ENCODE measurements at regions of chr7 and their contacts with region 1.

Region 1: GRCh38 chr7:75738987-75739795 is 450 bp upstream of the HIP1 start:
- DNase-seq: peak; percentile 98 to 99 (median 99)
- ATAC-seq: peak; percentile 97
- H3K4me3 ChIP-seq: peak overlapping the region; percentile 93
- H3K4me3 Mint-ChIP-seq: peak overlapping the region; percentile 82 to 100 (median 97)
- H3K27ac ChIP-seq: peak overlapping the region; percentile 80
- H3K27ac Mint-ChIP-seq: peak overlapping the region; percentile 28 to 99 (median 94)
- H3K4me1 ChIP-seq: peaks cover 4 to 15% of the 10 kb centered on the region in 2 donors
- H3K4me1 Mint-ChIP-seq: peaks cover 0 to 19% (median 14%) of the 10 kb centered on the region in 7 donors
- H3K27me3 ChIP-seq: no peaks in the 10 kb centered on the region
- H3K27me3 Mint-ChIP-seq: peaks cover 0 to 41% (median 4%) of the 10 kb centered on the region in 5 donors

Region 2: GRCh38 chr7:74083117-74083876 is 1655.9 kb before region 1 on chr7 and contains the start of gene LIMK1:
- CTCF ChIA-PET with region 1: no interaction called
- POLR2A ChIA-PET with region 1: no interaction called
- intact Hi-C with region 1: loop called in 1 of 2 experiments (anchors 2 kb)
- DNase-seq: peak; percentile 71 to 90 (median 83)
- ATAC-seq: peak; percentile 98
- H3K4me3 ChIP-seq: peak within 1 kb of the TSS; percentile 44
- H3K4me3 Mint-ChIP-seq: peak within 1 kb of the TSS; percentile 66 to 89 (median 80)
- H3K27ac ChIP-seq: peak within 1 kb of the TSS; percentile 69
- H3K27ac Mint-ChIP-seq: peak within 1 kb of the TSS in 8 of 9 donors; percentile 18 to 89 (median 76)
- H3K4me1 ChIP-seq: peaks cover 7 to 11% of the 10 kb centered on the region in 2 donors
- H3K4me1 Mint-ChIP-seq: peaks cover 0 to 18% (median 9%) of the 10 kb centered on the region in 7 donors
- H3K27me3 ChIP-seq: no peaks in the 10 kb centered on the region
- H3K27me3 Mint-ChIP-seq: no peaks in the 10 kb centered on the region
- total RNA-seq, gene LIMK1: 11.0 to 19.7 (median 14.1) TPM

Region 3: GRCh38 chr7:74449809-74450397 is 1289.3 kb before region 1 on chr7:
- CTCF ChIA-PET with region 1: no interaction called
- POLR2A ChIA-PET with region 1: no interaction called
- intact Hi-C with region 1: loop called in 1 of 2 experiments (anchors 10 kb)
- DNase-seq: peak; percentile 31 to 75 (median 60)
- ATAC-seq: peak; percentile 49
- H3K4me3 ChIP-seq: no peak overlapping the region
- H3K4me3 Mint-ChIP-seq: no peak overlapping the region
- H3K27ac ChIP-seq: no peak overlapping the region
- H3K27ac Mint-ChIP-seq: peak overlapping the region in 5 of 9 donors; percentile 40 to 84 (median 58)
- H3K4me1 ChIP-seq: peaks cover 0 to 5% of the 10 kb centered on the region in 2 donors
- H3K4me1 Mint-ChIP-seq: peaks cover 7 to 19% (median 14%) of the 10 kb centered on the region in 7 donors
- H3K27me3 ChIP-seq: no peaks in the 10 kb centered on the region
- H3K27me3 Mint-ChIP-seq: peaks cover 0 to 20% (median 0%) of the 10 kb centered on the region in 5 donors

Region 4: DNA sequence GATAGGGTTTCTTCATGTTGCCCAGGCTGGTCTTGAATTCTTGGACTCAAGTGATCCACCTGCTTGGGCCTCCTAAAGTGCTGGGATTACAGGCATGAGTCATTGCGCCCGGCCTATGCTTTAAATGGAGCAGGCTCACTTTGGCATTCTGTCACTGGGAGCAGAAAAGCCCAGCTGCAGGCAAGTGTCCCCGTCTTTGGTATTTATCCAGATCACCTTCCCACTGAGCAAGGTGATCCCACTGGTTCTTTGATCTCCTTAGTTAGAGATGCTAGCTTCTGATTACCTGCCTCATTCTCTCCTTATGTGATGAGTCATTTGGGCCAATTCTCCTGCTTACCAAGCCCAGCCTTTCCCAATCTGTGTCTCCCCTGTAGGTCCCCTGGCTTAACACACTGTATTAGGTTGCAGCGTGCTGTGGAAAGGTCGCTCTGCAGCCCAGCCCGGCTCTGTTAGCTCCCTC is 207.8 kb before region 1 on chr7:
- CTCF ChIA-PET with region 1: no interaction called
- POLR2A ChIA-PET with region 1: no interaction called
- intact Hi-C with region 1: loop called (anchors 1 kb)
- DNase-seq: no peak
- ATAC-seq: no peak
- H3K4me3 ChIP-seq: no peak overlapping the region
- H3K4me3 Mint-ChIP-seq: no peak overlapping the region
- H3K27ac ChIP-seq: no peak overlapping the region
- H3K27ac Mint-ChIP-seq: peak overlapping the region in 1 of 9 donors; percentile 47
- H3K4me1 ChIP-seq: peaks cover 2 to 8% of the 10 kb centered on the region in 2 donors
- H3K4me1 Mint-ChIP-seq: peaks cover 14 to 19% (median 15%) of the 10 kb centered on the region in 7 donors
- H3K27me3 ChIP-seq: no peaks in the 10 kb centered on the region
- H3K27me3 Mint-ChIP-seq: no peaks in the 10 kb centered on the region

Region 5: DNA sequence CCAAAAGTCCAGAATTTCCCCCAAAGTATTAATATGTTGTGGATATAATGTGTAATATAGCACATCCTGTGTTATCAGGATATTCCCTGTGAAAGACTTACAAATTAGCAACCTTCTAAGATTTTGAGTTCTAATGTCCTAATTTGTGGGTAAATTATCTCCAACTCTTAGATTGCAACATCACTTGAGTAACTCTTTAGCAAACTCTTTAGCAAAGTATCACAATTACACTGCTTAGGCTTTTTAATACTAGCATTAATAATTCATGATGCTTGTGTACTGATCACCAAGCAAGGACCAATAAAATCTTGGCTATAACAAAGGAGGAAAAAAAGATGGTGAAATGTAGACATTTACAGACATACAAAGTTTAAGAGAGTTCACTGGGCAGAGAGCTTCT is 28.1 kb before region 1 on chr7:
- CTCF ChIA-PET with region 1: no interaction called
- POLR2A ChIA-PET with region 1: no interaction called
- intact Hi-C with region 1: no loop called
- DNase-seq: no peak
- ATAC-seq: no peak
- H3K4me3 ChIP-seq: no peak overlapping the region
- H3K4me3 Mint-ChIP-seq: no peak overlapping the region
- H3K27ac ChIP-seq: no peak overlapping the region
- H3K27ac Mint-ChIP-seq: no peak overlapping the region
- H3K4me1 ChIP-seq: no peaks in the 10 kb centered on the region
- H3K4me1 Mint-ChIP-seq: peaks cover 0 to 16% (median 8%) of the 10 kb centered on the region in 7 donors
- H3K27me3 ChIP-seq: no peaks in the 10 kb centered on the region
- H3K27me3 Mint-ChIP-seq: peaks cover 0 to 25% (median 4%) of the 10 kb centered on the region in 5 donors

Region 6: GRCh38 chr7:75994388-75995051 is 255.3 kb after region 1 on chr7 and contains the start of gene TMEM120A:
- CTCF ChIA-PET with region 1: no interaction called
- POLR2A ChIA-PET with region 1: no interaction called
- intact Hi-C with region 1: loop called (anchors 1 kb)
- DNase-seq: peak; percentile 87 to 98 (median 92)
- ATAC-seq: peak; percentile 99
- H3K4me3 ChIP-seq: peak within 1 kb of the TSS; percentile 84
- H3K4me3 Mint-ChIP-seq: peak within 1 kb of the TSS; percentile 62 to 82 (median 76)
- H3K27ac ChIP-seq: peak within 1 kb of the TSS; percentile 80
- H3K27ac Mint-ChIP-seq: peak within 1 kb of the TSS in 5 of 9 donors; percentile 48 to 65 (median 55)
- H3K4me1 ChIP-seq: peaks cover 6 to 10% of the 10 kb centered on the region in 2 donors
- H3K4me1 Mint-ChIP-seq: peaks cover 12 to 37% (median 34%) of the 10 kb centered on the region in 7 donors
- H3K27me3 ChIP-seq: no peaks in the 10 kb centered on the region
- H3K27me3 Mint-ChIP-seq: no peaks in the 10 kb centered on the region
- total RNA-seq, gene TMEM120A: 19.1 to 38.6 (median 35.6) TPM

Region 7: DNA sequence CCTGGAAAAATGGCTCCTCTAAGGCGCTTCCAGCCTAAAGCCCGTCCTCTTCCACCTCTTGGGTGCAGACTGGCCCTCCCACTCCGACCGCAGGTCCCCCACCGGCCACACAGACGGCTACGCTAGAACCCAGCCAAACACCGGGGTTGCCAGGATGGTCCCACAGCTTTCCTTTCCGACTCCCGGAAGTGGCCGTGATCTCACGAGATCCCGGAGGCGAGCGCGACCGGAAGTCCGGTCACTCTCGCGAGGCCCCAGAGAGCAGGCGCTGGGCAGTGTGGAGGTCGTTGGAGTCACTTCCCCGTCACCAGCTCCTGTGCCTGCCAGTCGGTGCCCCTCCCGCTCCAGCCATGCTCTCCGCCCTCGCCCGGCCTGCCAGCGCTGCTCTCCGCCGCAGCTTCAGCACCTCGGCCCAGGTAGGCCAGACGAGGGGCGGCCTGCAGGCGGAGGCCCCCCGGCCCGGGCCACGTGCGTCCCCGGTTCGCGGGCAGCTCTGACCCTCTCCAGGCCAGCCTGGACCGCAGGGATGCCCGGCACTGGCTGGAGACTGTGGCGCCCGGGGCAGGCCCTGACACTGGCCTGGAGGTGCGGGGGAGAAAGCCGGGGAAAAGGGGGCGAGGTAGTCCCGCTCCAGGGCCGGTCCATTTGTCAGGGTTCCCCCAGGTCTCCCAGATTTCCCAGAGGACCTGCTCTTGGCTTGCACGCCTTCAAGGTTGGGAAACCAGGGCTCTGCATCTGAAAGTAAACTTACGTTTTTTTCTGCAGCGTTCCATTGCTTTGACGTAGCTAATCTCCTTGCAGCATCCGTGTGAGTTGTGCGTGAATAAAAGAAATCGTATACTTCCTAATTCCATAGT is 308.8 kb after region 1 on chr7 and contains the starts of genes MDH2 and STYXL1:
- CTCF ChIA-PET with region 1: no interaction called
- POLR2A ChIA-PET with region 1: no interaction called
- intact Hi-C with region 1: loop called in 1 of 2 experiments (anchors 2 kb)
- DNase-seq: peak; percentile 68 to 89 (median 76)
- ATAC-seq: peak; percentile 92
- H3K4me3 ChIP-seq: peak within 1 kb of the TSS; percentile 95
- H3K4me3 Mint-ChIP-seq: peak within 1 kb of the TSS; percentile 90 to 99 (median 97)
- H3K27ac ChIP-seq: peak within 1 kb of the TSS; percentile 80
- H3K27ac Mint-ChIP-seq: peak within 1 kb of the TSS; percentile 92 to 98 (median 97)
- H3K4me1 ChIP-seq: peaks cover 7 to 17% of the 10 kb centered on the region in 2 donors
- H3K4me1 Mint-ChIP-seq: peaks cover 36 to 70% (median 53%) of the 10 kb centered on the region in 7 donors
- H3K27me3 ChIP-seq: no peaks in the 10 kb centered on the region
- H3K27me3 Mint-ChIP-seq: no peaks in the 10 kb centered on the region
- total RNA-seq, gene MDH2: 71.7 to 172 (median 74.6) TPM
- total RNA-seq, gene STYXL1: 11.3 to 31.7 (median 20.0) TPM